ENCODE measurements at regions of chr6 and their contacts with region 1.

Region 1: GRCh38 chr6:7424967-7425807 is 35.6 kb downstream of the RIOK1 start:
- DNase-seq: peak; percentile 32 to 57
- H3K4me3 ChIP-seq: no peak overlapping the region
- H3K27ac ChIP-seq: no peak overlapping the region
- H3K4me1 ChIP-seq: no peaks in the 10 kb centered on the region
- H3K27me3 ChIP-seq: no peaks in the 10 kb centered on the region
- CTCF ChIP-seq: peak; percentile 61

Region 2: GRCh38 chr6:7261032-7261841 is 163.9 kb before region 1 on chr6:
- CTCF ChIA-PET with region 1: no interaction called
- POLR2A ChIA-PET with region 1: no interaction called
- intact Hi-C with region 1: no loop called
- DNase-seq: peak; percentile 74 to 92
- H3K4me3 ChIP-seq: peak overlapping the region; percentile 62; the same call in 1 of the 2 replicates
- H3K27ac ChIP-seq: no peak overlapping the region; the same call in 1 of the 2 replicates
- H3K4me1 ChIP-seq: peaks cover 7% of the 10 kb centered on the region
- H3K27me3 ChIP-seq: no peaks in the 10 kb centered on the region
- CTCF ChIP-seq: no peak

Region 3: DNA sequence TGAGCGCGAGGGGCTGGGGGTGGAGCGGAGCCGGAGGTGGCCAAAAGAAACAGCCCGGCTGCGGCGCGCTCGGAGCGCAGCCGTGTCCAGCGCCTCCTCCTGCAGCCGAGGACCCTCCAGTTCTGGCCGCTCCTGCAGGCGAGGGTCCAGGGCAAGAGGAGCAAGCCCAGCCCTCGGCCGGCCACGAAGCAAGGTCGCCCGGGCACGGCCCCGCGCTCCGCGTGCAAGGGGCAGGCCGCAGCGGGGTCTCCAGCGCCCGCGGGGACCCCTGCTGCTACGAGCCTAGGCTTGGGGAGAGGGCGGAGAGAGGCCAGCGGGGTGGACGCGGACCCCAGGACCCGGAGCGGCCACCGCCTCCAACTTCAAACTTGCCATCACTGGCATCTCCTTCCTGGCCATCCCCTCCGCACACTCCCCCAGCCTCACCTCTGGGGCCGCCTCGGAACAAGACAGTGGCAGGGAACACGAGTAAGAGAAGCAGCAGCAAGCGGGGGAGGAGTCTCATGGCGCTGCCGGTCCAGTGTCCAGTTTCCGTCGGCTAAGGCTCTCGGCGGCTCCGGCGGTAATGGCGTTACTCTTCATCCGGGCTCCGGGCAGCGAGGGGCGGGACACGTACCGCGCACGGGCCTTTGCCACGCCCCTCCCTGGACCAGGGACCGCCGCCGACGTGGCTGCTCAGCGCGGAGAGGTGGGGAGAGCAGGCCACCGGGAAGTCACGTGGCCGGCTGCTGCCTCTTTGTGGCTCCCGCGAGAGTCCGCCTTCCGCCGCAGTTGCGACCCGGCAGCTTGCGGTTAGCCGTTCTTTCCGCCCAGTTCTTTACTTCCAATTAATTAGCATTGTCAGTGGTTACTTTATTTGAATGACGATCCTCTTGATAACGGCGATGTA is 112.3 kb before region 1 on chr6 and contains the start of gene SSR1:
- CTCF ChIA-PET with region 1: no interaction called
- POLR2A ChIA-PET with region 1: interaction called, 37 read pairs
- intact Hi-C with region 1: no loop called
- DNase-seq: peak; percentile 84 to 98
- H3K4me3 ChIP-seq: peak within 1 kb of the TSS; percentile 94
- H3K27ac ChIP-seq: peak within 1 kb of the TSS; percentile 97
- H3K4me1 ChIP-seq: peaks cover 22% of the 10 kb centered on the region
- H3K27me3 ChIP-seq: no peaks in the 10 kb centered on the region
- CTCF ChIP-seq: no peak
- total RNA-seq, gene SSR1: 104 and 118 TPM in 2 replicates

Region 4: GRCh38 chr6:7528565-7528964 is 103.4 kb after region 1 on chr6:
- CTCF ChIA-PET with region 1: no interaction called
- POLR2A ChIA-PET with region 1: no interaction called
- intact Hi-C with region 1: no loop called
- DNase-seq: no peak
- H3K4me3 ChIP-seq: no peak overlapping the region
- H3K27ac ChIP-seq: no peak overlapping the region
- H3K4me1 ChIP-seq: peaks cover 17% of the 10 kb centered on the region
- H3K27me3 ChIP-seq: no peaks in the 10 kb centered on the region
- CTCF ChIP-seq: no peak

Region 5: DNA sequence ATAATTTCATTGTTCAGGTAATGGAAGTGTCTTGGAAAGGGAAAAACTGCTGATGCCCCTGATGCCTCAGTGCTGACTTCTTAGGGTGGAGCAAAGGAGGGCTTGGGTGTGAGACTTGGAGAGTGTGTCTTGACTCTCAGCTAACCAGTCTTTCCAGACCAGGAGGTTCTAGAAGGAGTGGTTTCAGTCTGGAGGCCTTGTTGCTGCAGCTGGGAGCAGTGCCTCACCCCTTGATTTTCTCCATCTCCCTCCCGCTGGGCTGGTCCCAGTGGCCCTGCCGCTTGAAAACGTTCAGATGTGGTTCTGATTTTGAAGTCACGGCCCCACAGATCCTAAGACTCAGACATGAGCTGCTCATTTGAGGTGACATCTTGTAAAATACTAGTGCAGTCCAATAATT is 121.7 kb after region 1 on chr6:
- CTCF ChIA-PET with region 1: interaction called, 13 read pairs
- POLR2A ChIA-PET with region 1: no interaction called
- intact Hi-C with region 1: no loop called
- DNase-seq: peak in 1 of 2 experiments; percentile 25
- H3K4me3 ChIP-seq: no peak overlapping the region
- H3K27ac ChIP-seq: no peak overlapping the region
- H3K4me1 ChIP-seq: peaks cover 45% of the 10 kb centered on the region
- H3K27me3 ChIP-seq: no peaks in the 10 kb centered on the region
- CTCF ChIP-seq: no peak

Measured in PC-9 (cell line).